HEK293 (cell line): ENCODE measurements at regions of chr5 and their contacts with region 1.

Region 1: GRCh38 chr5:154868702-154869101 is 10.3 kb downstream of the CNOT8 start:
- H3K4me3 ChIP-seq: no peak overlapping the region
- H3K27ac ChIP-seq: no peak overlapping the region
- H3K4me1 ChIP-seq: no peaks in the 10 kb centered on the region
- CTCF ChIP-seq: peak; percentile 58; the same call in 1 of the 2 replicates

Region 2: GRCh38 chr5:154649569-154649968 is 219.1 kb before region 1 on chr5:
- CTCF ChIA-PET with region 1: interaction called, 12 read pairs
- POLR2A ChIA-PET with region 1: interaction called, 3 read pairs
- H3K4me3 ChIP-seq: no peak overlapping the region
- H3K27ac ChIP-seq: no peak overlapping the region
- H3K4me1 ChIP-seq: no peaks in the 10 kb centered on the region
- CTCF ChIP-seq: no peak

Region 3: DNA sequence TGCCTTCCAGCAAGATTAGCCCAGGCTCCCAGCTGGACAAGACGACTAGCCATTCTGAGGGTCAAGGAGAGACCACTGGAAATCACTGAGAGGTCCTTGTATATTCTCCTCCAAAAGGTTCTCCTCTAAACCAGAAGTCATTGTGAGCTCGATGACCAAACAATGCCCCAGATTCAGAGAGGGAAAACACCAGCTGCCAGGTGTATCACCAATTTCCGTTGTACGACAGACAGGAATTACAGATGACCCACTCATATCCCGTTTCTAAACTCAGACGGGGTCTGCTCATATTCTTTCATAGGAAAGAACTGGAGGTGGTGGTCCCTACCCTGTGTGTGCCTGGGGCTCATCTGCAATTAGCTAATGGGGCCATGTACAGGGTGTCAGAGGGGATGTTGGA is 32.5 kb before region 1 on chr5:
- CTCF ChIA-PET with region 1: no interaction called
- POLR2A ChIA-PET with region 1: interaction called, 11 read pairs
- H3K4me3 ChIP-seq: no peak overlapping the region
- H3K27ac ChIP-seq: no peak overlapping the region
- H3K4me1 ChIP-seq: peaks cover 12% of the 10 kb centered on the region; the same call in 1 of the 2 replicates
- CTCF ChIP-seq: no peak

Region 4: DNA sequence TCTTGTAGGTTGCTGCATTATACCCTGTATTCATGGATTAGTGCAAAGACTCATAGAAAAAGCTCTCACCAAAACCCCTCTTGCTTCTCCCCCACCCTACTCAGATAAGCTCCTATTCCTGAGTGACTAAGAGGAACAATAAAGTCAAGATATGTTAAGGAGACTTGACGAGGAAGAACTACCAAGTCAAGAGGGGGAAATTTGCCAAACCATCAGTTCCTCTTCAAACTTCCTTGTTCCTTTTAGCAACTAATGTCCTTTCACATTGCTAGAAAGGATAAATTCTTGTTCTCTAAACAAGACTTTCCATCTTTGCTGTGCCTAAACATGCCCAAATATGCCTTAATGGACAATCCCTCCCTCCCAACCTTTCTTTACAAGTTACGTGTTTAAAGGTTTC is 16.7 kb after region 1 on chr5:
- CTCF ChIA-PET with region 1: no interaction called
- POLR2A ChIA-PET with region 1: no interaction called
- H3K4me3 ChIP-seq: no peak overlapping the region
- H3K27ac ChIP-seq: no peak overlapping the region
- H3K4me1 ChIP-seq: no peaks in the 10 kb centered on the region
- CTCF ChIP-seq: no peak